ENCODE measurements at regions of chr6 and their contacts with region 1.

Region 1: DNA sequence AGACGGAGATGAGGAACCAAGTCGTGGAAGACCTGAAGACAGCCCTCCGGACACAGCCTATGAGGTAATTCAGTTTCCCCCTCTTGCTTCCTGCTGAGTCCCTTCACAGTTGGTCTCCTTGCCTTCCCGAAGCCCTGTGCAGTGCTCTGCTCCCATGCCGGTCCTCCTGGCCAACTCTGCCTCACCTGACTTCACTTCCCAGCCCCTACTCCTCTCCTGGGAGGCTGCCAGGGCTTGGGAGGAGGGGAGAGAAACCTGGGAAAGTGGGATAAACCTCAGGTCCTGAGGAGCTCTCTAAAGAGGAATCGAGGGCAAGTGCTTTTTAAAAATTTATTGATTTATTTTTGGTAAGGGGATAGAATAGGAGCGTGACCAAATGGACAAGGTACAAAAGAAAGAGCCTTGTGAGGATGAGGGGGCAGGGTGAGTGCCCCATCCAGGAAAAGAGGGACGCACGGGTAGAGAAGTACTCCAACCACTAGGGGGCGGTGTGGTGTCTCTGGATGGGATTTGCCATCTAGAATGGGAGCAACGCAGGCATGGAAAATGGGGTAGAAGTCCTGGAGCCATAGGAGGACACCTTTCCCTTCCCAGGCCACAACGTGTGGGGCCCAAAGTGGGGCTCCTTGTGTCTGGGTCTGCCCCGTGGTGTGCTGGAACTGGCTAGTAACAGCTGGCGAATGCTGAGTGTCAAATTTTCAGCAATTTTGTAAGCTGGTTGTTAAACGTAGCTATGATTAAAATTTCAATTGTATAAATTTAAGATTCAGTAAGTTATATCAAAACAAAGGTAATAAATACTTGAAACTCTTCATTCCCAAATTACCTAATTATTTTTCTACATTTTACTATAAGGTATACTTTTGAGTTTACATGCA is 69.0 kb downstream of the MOCS1 start:
- DNase-seq: no peak
- ATAC-seq: peak; percentile 73
- H3K4me3 ChIP-seq: no peak overlapping the region
- H3K27ac ChIP-seq: no peak overlapping the region
- H3K4me1 ChIP-seq: no peaks in the 10 kb centered on the region
- H3K27me3 ChIP-seq: no peaks in the 10 kb centered on the region; a peak in 2 of 4 replicates
- CTCF ChIP-seq: peak; percentile 65 to 82 (median 82)
- EP300 ChIP-seq: no peak
- POLR2A ChIP-seq: no peak
- RAD21 ChIP-seq: peak; percentile 56

Region 2: GRCh38 chr6:39361657-39362486 is 503.4 kb before region 1 on chr6:
- CTCF ChIA-PET with region 1: interaction called, 24 read pairs
- POLR2A ChIA-PET with region 1: no interaction called
- RAD21 ChIA-PET with region 1: interaction called, 15 read pairs
- SMC1A ChIA-PET with region 1: interaction called, 9 read pairs
- in situ Hi-C with region 1: no loop called
- intact Hi-C with region 1: no loop called
- DNase-seq: no peak
- ATAC-seq: peak; percentile 95
- H3K4me3 ChIP-seq: no peak overlapping the region
- H3K27ac ChIP-seq: no peak overlapping the region
- H3K4me1 ChIP-seq: no peaks in the 10 kb centered on the region
- H3K27me3 ChIP-seq: no peaks in the 10 kb centered on the region
- CTCF ChIP-seq: peak; percentile 71 to 92 (median 85)
- EP300 ChIP-seq: no peak
- POLR2A ChIP-seq: no peak
- RAD21 ChIP-seq: peak; percentile 81

Region 3: DNA sequence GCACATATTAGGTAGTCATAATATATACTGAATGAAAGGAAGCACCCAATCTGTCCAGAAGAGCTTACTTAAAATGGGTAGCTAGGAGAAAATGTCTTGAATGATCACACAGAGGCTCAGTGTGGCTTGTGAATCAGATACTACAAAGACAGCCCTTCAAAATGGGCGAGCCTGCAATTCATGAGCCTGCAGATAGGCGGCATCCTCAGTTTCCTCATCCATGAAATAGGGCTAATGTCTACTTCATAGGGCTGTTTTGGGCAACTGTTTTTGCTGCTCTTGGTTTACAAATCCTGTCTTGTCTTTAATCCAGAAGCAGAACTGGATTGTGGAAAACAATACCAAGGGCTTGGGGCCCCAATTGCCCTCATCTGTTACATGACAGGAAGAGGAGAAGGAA is 413.4 kb before region 1 on chr6:
- CTCF ChIA-PET with region 1: interaction called, 10 read pairs
- POLR2A ChIA-PET with region 1: no interaction called
- RAD21 ChIA-PET with region 1: interaction called, 3 read pairs
- SMC1A ChIA-PET with region 1: interaction called, 4 read pairs
- in situ Hi-C with region 1: no loop called
- intact Hi-C with region 1: no loop called
- DNase-seq: no peak
- ATAC-seq: peak; percentile 76
- H3K4me3 ChIP-seq: no peak overlapping the region
- H3K27ac ChIP-seq: no peak overlapping the region
- H3K4me1 ChIP-seq: no peaks in the 10 kb centered on the region
- H3K27me3 ChIP-seq: no peaks in the 10 kb centered on the region
- CTCF ChIP-seq: peak; percentile 40 to 66 (median 60)
- EP300 ChIP-seq: no peak
- POLR2A ChIP-seq: no peak
- RAD21 ChIP-seq: peak; percentile 24; the same call in 1 of the 2 replicates

Region 4: DNA sequence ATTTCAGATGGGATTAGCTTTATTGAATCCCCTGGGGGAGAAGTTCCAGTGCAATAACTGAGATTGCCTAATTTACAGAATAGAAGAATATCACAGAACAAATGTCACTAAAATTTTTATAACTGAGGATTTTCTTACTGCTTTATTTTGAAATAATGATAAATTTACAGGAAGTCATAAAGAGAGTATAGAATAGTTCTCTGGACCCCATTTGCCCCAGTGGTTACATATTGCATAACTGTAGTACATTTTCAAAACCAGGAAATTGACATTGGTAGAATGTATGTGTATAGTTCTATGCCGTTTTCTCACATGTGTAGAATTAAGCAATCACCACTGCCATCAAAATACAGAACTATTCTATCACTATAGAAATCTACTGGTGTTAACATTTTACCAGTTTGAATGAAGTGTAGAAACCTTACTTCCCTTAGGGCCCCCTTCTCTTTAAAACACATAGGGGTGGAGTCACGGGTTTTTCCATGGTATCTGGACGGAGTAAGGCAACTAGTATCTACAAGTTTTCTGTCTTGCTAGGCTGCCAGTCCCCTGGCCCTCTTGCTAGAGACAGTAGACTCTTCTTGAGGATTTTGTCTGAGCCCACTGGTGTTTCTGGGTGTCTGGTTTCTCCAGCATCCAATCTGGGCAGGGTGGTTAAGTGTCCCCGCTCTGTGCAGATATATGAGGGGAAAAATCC is 158.3 kb before region 1 on chr6:
- CTCF ChIA-PET with region 1: no interaction called
- POLR2A ChIA-PET with region 1: no interaction called
- RAD21 ChIA-PET with region 1: no interaction called
- SMC1A ChIA-PET with region 1: no interaction called
- in situ Hi-C with region 1: no loop called
- intact Hi-C with region 1: no loop called
- DNase-seq: no peak
- ATAC-seq: peak; percentile 37
- H3K4me3 ChIP-seq: no peak overlapping the region
- H3K27ac ChIP-seq: no peak overlapping the region
- H3K4me1 ChIP-seq: no peaks in the 10 kb centered on the region
- H3K27me3 ChIP-seq: no peaks in the 10 kb centered on the region
- CTCF ChIP-seq: no peak
- EP300 ChIP-seq: no peak
- POLR2A ChIP-seq: no peak
- RAD21 ChIP-seq: no peak

Region 5: GRCh38 chr6:39812853-39813533 is 52.3 kb before region 1 on chr6:
- CTCF ChIA-PET with region 1: interaction called, 22 read pairs
- POLR2A ChIA-PET with region 1: no interaction called
- RAD21 ChIA-PET with region 1: no interaction called
- SMC1A ChIA-PET with region 1: interaction called, 4 read pairs
- in situ Hi-C with region 1: no loop called
- intact Hi-C with region 1: no loop called
- DNase-seq: peak; percentile 36
- ATAC-seq: peak; percentile 91
- H3K4me3 ChIP-seq: no peak overlapping the region
- H3K27ac ChIP-seq: no peak overlapping the region
- H3K4me1 ChIP-seq: peaks cover 3% of the 10 kb centered on the region; the same call in 1 of the 2 replicates
- H3K27me3 ChIP-seq: no peaks in the 10 kb centered on the region
- CTCF ChIP-seq: peak in 1 of 3 experiments; percentile 16; a peak in 1 of 6 replicates
- EP300 ChIP-seq: no peak
- POLR2A ChIP-seq: no peak
- RAD21 ChIP-seq: no peak

Region 6: GRCh38 chr6:39892490-39893129 is 27.4 kb after region 1 on chr6:
- CTCF ChIA-PET with region 1: interaction called, 38 read pairs
- POLR2A ChIA-PET with region 1: no interaction called
- RAD21 ChIA-PET with region 1: interaction called, 4 read pairs
- SMC1A ChIA-PET with region 1: interaction called, 4 read pairs
- in situ Hi-C with region 1: no loop called
- intact Hi-C with region 1: no loop called
- DNase-seq: peak; percentile 2
- ATAC-seq: peak; percentile 98
- H3K4me3 ChIP-seq: no peak overlapping the region
- H3K27ac ChIP-seq: no peak overlapping the region
- H3K4me1 ChIP-seq: no peaks in the 10 kb centered on the region
- H3K27me3 ChIP-seq: no peaks in the 10 kb centered on the region
- CTCF ChIP-seq: peak; percentile 44 to 73 (median 67); a peak in 5 of 6 replicates
- EP300 ChIP-seq: no peak
- POLR2A ChIP-seq: no peak
- RAD21 ChIP-seq: peak; percentile 49

Region 7: GRCh38 chr6:40845553-40845952 is 980.3 kb after region 1 on chr6:
- CTCF ChIA-PET with region 1: interaction called, 12 read pairs
- POLR2A ChIA-PET with region 1: no interaction called
- RAD21 ChIA-PET with region 1: no interaction called
- SMC1A ChIA-PET with region 1: interaction called, 4 read pairs
- in situ Hi-C with region 1: no loop called
- intact Hi-C with region 1: no loop called
- DNase-seq: no peak
- ATAC-seq: peak; percentile 74
- H3K4me3 ChIP-seq: no peak overlapping the region
- H3K27ac ChIP-seq: no peak overlapping the region
- H3K4me1 ChIP-seq: no peaks in the 10 kb centered on the region
- H3K27me3 ChIP-seq: peaks cover 2 to 10% of the 10 kb centered on the region in 2 experiments; a peak in 3 of 4 replicates
- CTCF ChIP-seq: peak; percentile 64 to 73 (median 66)
- EP300 ChIP-seq: no peak
- POLR2A ChIP-seq: no peak
- RAD21 ChIP-seq: peak; percentile 55